ENCODE measurements at regions of chr16 and their contacts with region 1.

Region 1: DNA sequence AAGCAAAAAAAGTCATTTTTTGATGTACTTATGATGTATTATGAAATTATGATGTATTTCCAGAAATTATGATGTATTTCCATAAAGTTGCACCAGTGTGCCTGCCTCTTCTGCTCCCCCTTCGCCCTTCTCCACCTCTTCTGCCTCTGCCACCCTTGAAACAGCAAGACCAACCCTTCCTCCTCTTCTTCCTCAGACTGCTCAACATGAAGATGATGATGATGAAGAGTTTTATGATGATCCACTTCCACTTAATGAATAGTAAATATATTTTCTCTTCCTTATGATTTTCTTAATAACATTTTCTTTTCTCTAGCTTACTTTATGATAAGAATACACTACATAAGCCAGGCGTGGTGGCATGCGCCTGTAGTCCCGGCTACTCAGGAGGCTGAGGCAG is 7.4 kb upstream of the ZNF785 start:
- DNase-seq: no peak
- H3K4me3 ChIP-seq: no peak overlapping the region
- H3K4me3 Mint-ChIP-seq: no peak overlapping the region
- H3K27ac ChIP-seq: no peak overlapping the region
- H3K27ac Mint-ChIP-seq: no peak overlapping the region
- H3K4me1 ChIP-seq: no peaks in the 10 kb centered on the region
- H3K4me1 Mint-ChIP-seq: peaks cover 0 to 2% (median 0%) of the 10 kb centered on the region in 3 donors
- H3K27me3 ChIP-seq: no peaks in the 10 kb centered on the region
- H3K27me3 Mint-ChIP-seq: no peaks in the 10 kb centered on the region

Region 2: GRCh38 chr16:30609926-30610839 is 17.3 kb after region 1 on chr16 and contains the start of gene ZNF689:
- CTCF ChIA-PET with region 1: interaction called, 18 read pairs
- POLR2A ChIA-PET with region 1: interaction called, 12 read pairs
- DNase-seq: peak; percentile 86 to 96 (median 93)
- H3K4me3 ChIP-seq: peak within 1 kb of the TSS; percentile 97
- H3K4me3 Mint-ChIP-seq: peak within 1 kb of the TSS; percentile 83 to 98 (median 94)
- H3K27ac ChIP-seq: peak within 1 kb of the TSS; percentile 97
- H3K27ac Mint-ChIP-seq: peak within 1 kb of the TSS; percentile 83 to 100 (median 96)
- H3K4me1 ChIP-seq: peaks cover 12% of the 10 kb centered on the region
- H3K4me1 Mint-ChIP-seq: peaks cover 13 to 26% (median 22%) of the 10 kb centered on the region in 3 donors
- H3K27me3 ChIP-seq: no peaks in the 10 kb centered on the region
- H3K27me3 Mint-ChIP-seq: peaks cover 0 to 3% of the 10 kb centered on the region in 2 donors
- total RNA-seq, gene ZNF689: 14.6 to 15.7 TPM